PC-9 (cell line): ENCODE measurements at regions of chr5 and their contacts with region 1.

Region 1: DNA sequence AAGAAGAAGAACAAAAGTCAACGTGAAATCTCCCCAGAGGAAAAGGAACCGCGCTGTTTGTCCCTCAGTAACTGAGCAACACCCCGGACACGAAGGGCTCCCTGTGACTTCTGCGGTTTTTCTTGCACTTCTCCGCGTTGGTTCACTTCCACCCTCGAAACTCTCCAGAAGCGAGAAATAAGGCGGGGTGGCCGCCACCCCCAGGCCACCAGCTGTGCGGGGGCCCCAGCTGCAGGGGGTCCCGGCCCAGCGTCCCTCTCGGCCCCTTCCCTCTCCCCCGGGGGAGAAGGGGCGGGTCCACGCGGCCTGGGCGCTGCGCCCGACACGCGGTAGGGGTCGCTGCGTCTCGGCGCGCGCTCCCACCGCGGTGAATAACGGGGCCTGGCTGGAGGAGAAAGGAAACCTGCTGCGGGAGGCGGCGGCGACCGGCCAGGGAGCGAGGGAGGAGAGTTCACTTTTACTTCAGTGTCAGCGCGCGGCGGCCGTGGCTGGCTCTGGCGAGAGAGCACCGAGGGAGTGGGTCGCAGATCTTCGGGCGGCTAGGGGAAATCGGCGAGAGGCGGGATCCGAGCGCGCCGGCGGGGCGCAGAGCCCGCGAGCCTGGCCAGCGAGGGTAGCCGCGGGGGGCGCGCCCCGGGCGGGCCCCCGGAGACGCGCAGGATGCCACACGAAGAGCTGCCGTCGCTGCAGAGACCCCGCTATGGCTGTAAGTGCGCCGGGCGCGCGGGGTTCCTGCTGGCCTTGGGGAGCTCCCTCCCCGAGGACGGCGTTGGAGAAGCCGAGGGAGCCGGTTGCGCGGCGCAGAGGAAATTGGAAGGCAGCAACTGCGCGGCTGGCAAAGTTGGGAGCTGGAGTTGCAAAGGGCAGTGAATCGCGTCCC is at the start of gene IQGAP2:
- DNase-seq: peak in 1 of 2 experiments; percentile 39
- H3K4me3 ChIP-seq: peak within 1 kb of the TSS; percentile 76
- H3K27ac ChIP-seq: no peak within 1 kb of the TSS
- H3K4me1 ChIP-seq: peaks cover 11% of the 10 kb centered on the region; the same call in 1 of the 2 replicates
- H3K27me3 ChIP-seq: no peaks in the 10 kb centered on the region
- CTCF ChIP-seq: peak; percentile 66; the same call in 1 of the 2 replicates
- total RNA-seq, gene IQGAP2: not detected in 2 replicates

Region 2: DNA sequence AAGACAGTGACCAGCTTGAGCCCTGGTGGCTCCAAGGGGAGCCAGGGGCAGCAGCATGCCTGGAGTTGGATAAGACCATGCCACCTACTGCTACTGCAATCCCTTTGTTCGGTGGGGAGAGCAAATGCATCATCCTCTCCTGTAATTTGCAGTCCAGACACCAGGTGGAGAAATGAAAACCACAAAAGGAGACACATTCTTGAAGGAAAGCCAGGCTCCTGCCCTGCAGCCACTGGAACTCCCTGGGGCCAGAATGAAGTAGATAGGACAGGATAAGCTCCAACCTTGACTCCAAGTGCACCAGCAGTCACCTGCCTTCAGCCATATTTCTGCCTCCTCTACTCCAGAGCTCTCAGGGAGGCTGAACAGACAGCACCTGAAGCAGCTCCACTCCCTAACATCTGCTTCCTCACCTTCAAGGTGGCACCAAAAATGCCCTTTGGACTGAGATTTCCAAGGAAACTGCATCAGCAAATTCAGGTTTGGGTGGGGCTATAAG is 65.1 kb before region 1 on chr5:
- CTCF ChIA-PET with region 1: no interaction called
- POLR2A ChIA-PET with region 1: no interaction called
- intact Hi-C with region 1: loop called (anchors 2 kb)
- DNase-seq: peak; percentile 72 to 76
- H3K4me3 ChIP-seq: no peak overlapping the region
- H3K27ac ChIP-seq: no peak overlapping the region
- H3K4me1 ChIP-seq: 0 out of 2 replicates have a peak, but pooled peaks cover 4% of the 10 kb centered on the region
- H3K27me3 ChIP-seq: no peaks in the 10 kb centered on the region
- CTCF ChIP-seq: peak; percentile 78

Region 3: GRCh38 chr5:76351577-76351976 is 51.5 kb before region 1 on chr5:
- CTCF ChIA-PET with region 1: no interaction called
- POLR2A ChIA-PET with region 1: no interaction called
- intact Hi-C with region 1: no loop called
- DNase-seq: no peak
- H3K4me3 ChIP-seq: no peak overlapping the region
- H3K27ac ChIP-seq: no peak overlapping the region
- H3K4me1 ChIP-seq: no peaks in the 10 kb centered on the region
- H3K27me3 ChIP-seq: no peaks in the 10 kb centered on the region
- CTCF ChIP-seq: no peak

Region 4: GRCh38 chr5:76372323-76373054 is 30.6 kb before region 1 on chr5:
- CTCF ChIA-PET with region 1: no interaction called
- POLR2A ChIA-PET with region 1: no interaction called
- intact Hi-C with region 1: loop called (anchors 2 kb)
- DNase-seq: peak; percentile 68 to 95
- H3K4me3 ChIP-seq: peak overlapping the region; percentile 13; the same call in 1 of the 2 replicates
- H3K27ac ChIP-seq: peak overlapping the region; percentile 81
- H3K4me1 ChIP-seq: peaks cover 21% of the 10 kb centered on the region
- H3K27me3 ChIP-seq: no peaks in the 10 kb centered on the region
- CTCF ChIP-seq: no peak

Region 5: GRCh38 chr5:76608833-76609232 is 205.7 kb after region 1 on chr5:
- CTCF ChIA-PET with region 1: no interaction called
- POLR2A ChIA-PET with region 1: interaction called, 21 read pairs
- intact Hi-C with region 1: no loop called
- DNase-seq: no peak
- H3K4me3 ChIP-seq: no peak overlapping the region
- H3K27ac ChIP-seq: no peak overlapping the region
- H3K4me1 ChIP-seq: peaks cover 7% of the 10 kb centered on the region
- H3K27me3 ChIP-seq: no peaks in the 10 kb centered on the region
- CTCF ChIP-seq: no peak

Region 6: DNA sequence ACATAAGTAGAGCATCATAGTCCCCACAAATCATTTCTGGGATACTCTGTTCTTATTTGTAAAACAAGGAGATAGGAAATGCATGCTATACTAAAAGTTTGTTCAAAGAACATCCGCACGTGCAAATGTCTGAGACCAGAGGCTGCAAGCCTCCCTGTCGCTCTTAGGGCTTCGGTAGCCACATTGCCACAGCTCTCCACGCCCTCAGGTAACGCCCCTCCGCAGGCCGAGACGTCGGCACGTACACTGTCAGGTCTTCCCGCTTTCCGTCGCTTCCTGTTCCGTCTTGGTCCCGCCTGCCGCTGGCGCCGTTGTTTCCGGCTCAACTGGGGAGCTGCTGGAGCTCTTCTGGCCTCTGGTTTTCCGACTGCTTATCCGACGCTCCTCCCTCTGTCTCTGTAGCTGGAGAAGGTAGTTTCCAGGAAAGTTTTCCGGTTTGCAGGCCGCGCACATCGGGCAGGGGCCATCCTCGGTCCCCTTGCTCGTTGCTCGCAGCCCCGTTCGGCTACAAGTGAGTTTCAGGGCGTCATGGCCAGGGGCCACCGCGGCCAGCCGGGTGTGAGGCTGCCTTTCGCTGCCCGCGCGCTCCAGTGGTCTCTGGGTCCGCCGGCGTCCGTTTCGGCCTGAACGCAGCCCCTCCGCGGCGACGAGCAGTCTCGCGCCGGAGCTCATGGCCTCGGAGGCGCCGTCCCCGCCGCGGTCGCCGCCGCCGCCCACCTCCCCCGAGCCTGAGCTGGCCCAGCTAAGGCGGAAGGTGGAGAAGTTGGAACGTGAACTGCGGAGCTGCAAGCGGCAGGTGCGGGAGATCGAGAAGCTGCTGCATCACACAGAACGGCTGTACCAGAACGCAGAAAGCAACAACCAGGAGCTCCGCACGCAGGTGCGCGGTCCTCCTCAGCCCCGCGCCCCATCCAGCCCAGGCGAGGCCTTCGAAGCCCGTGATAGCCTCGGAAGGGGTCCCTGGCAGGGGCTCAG is 627.3 kb after region 1 on chr5 and contains the start of gene AGGF1:
- CTCF ChIA-PET with region 1: interaction called, 10 read pairs
- POLR2A ChIA-PET with region 1: no interaction called
- intact Hi-C with region 1: no loop called
- DNase-seq: peak; percentile 85 to 90
- H3K4me3 ChIP-seq: peak within 1 kb of the TSS; percentile 98
- H3K27ac ChIP-seq: peak within 1 kb of the TSS; percentile 74
- H3K4me1 ChIP-seq: peaks cover 15% of the 10 kb centered on the region
- H3K27me3 ChIP-seq: no peaks in the 10 kb centered on the region
- CTCF ChIP-seq: no peak
- total RNA-seq, gene AGGF1: 15.4 and 19.4 TPM in 2 replicates

Region 7: DNA sequence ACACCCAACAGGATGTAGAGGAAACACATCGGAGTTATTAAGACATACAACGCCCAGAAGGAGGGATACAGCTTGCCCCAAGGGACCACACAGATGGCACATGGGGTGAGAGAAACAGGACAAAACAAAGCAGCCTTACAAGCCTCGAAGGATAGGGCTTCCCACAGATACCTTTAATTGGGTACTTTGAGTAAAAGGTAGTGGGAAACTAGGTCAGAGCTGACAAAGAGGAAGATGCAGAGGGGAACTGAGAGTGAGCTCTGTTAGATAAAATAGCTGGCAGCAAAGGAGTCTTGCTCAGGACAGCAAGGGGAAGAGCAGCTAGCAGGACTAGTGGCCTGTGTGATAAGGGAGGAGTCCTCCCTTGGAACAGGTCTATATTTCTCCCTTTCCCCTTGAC is 1187.2 kb after region 1 on chr5:
- CTCF ChIA-PET with region 1: no interaction called
- POLR2A ChIA-PET with region 1: no interaction called
- intact Hi-C with region 1: no loop called
- DNase-seq: no peak
- H3K4me3 ChIP-seq: no peak overlapping the region
- H3K27ac ChIP-seq: no peak overlapping the region
- H3K4me1 ChIP-seq: no peaks in the 10 kb centered on the region
- H3K27me3 ChIP-seq: no peaks in the 10 kb centered on the region
- CTCF ChIP-seq: no peak